ENCODE measurements at regions of chr3 and their contacts with region 1.

Region 1: DNA sequence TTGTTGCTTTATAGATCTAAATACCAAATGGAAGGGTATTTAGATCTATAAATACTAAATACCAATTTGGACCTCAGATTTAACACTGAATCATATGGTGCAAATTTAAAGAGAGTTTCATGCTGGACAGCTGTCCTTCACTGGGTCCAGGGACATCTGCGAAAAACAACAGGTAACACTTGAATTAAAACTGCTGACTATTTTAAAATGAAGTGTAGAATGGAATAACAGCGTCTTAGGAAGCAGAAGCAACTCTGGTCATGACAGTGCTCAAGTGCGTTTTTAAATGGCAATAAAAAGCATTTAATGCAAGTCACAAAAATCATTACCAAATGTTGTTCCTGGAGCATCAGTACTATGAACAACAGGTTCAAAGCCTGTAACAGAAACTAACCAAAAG is 106.3 kb downstream of the TFG start:
- DNase-seq: no peak
- H3K4me3 ChIP-seq: no peak overlapping the region
- H3K27ac ChIP-seq: no peak overlapping the region
- H3K4me1 ChIP-seq: no peaks in the 10 kb centered on the region
- H3K27me3 ChIP-seq: no peaks in the 10 kb centered on the region
- CTCF ChIP-seq: no peak

Region 2: GRCh38 chr3:100311011-100311410 is 504.6 kb before region 1 on chr3:
- CTCF ChIA-PET with region 1: no interaction called
- dilution Hi-C with region 1: no loop called
- in situ Hi-C with region 1: no loop called
- intact Hi-C with region 1: no loop called
- DNase-seq: no peak
- H3K4me3 ChIP-seq: no peak overlapping the region
- H3K27ac ChIP-seq: no peak overlapping the region
- H3K4me1 ChIP-seq: no peaks in the 10 kb centered on the region
- H3K27me3 ChIP-seq: no peaks in the 10 kb centered on the region
- CTCF ChIP-seq: no peak

Region 3: DNA sequence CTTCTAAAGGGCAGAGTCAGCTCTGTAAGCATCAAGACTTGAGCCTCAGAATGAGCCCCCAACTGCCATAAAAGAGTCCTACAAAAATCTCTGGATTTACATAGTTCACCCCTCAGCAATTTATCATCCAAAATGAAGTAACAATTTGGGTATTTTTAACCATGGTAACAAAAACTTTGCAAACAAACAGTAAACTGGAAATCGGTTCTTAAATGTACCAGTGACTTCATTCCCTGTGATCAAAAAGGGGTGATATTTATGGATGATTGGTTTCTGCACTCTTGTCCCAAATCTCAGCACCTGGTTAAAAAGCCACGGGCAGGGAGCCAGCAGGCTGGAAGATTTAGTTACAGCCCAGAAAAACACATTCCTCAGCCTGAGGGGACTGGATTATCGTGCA is 32.7 kb before region 1 on chr3:
- CTCF ChIA-PET with region 1: interaction called, 30 read pairs
- dilution Hi-C with region 1: no loop called
- in situ Hi-C with region 1: no loop called
- intact Hi-C with region 1: no loop called
- DNase-seq: no peak
- H3K4me3 ChIP-seq: no peak overlapping the region
- H3K27ac ChIP-seq: no peak overlapping the region
- H3K4me1 ChIP-seq: no peaks in the 10 kb centered on the region
- H3K27me3 ChIP-seq: no peaks in the 10 kb centered on the region
- CTCF ChIP-seq: no peak

Region 4: GRCh38 chr3:100972867-100973266 is 157.3 kb after region 1 on chr3:
- CTCF ChIA-PET with region 1: no interaction called
- dilution Hi-C with region 1: no loop called
- in situ Hi-C with region 1: no loop called
- intact Hi-C with region 1: loop called (anchors 5 kb)
- DNase-seq: peak; percentile 78
- H3K4me3 ChIP-seq: no peak overlapping the region
- H3K27ac ChIP-seq: no peak overlapping the region
- H3K4me1 ChIP-seq: peaks cover 13% of the 10 kb centered on the region
- H3K27me3 ChIP-seq: no peaks in the 10 kb centered on the region
- CTCF ChIP-seq: peak in 1 of 2 donors; percentile 8

Measured in mammary epithelial cell (primary cell).